ENCODE measurements at regions of chr6 and their contacts with region 1.

Region 1: DNA sequence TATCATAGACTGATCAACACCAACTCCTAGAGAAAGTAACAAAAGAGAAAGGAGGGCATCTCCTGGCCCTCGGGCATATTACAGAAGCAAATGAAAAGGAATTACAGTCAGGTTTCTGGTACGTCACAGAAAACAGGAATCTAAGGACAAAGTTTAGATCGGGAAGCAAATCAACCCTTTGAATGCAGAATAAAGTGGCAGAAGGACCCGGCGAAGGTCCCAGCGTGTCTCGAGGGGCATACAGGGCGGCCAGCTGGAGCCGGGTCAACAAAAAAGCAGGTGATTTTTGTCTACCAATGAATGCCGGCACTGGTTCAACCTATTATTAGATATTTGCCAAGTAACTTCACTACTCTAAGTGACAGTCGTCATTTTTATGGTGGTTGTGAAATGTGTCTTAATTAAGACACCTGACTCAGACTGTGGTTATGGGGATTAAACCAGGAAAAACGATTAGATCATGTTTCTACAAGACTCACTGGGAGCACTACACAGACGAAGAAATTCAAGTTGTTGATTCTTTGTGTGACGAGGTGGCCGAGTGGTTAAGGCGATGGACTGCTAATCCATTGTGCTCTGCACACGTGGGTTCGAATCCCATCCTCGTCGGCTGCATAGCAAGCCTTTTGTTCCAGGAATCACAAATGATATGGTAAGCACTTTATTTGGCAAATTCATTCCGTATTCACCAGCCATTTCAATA is 12.4 kb upstream of the ZSCAN9 start:
- DNase-seq: peak; percentile 92
- H3K4me3 ChIP-seq: peak overlapping the region; percentile 41
- H3K27ac ChIP-seq: no peak overlapping the region
- H3K4me1 ChIP-seq: peaks cover 3% of the 10 kb centered on the region
- H3K27me3 ChIP-seq: no peaks in the 10 kb centered on the region
- CTCF ChIP-seq: peak; percentile 36; the same call in 1 of the 2 replicates

Region 2: GRCh38 chr6:27902335-27903314 is 310.0 kb before region 1 on chr6:
- CTCF ChIA-PET with region 1: no interaction called
- POLR2A ChIA-PET with region 1: no interaction called
- intact Hi-C with region 1: loop called (anchors 5 kb)
- DNase-seq: peak; percentile 88
- H3K4me3 ChIP-seq: peak overlapping the region; percentile 82
- H3K27ac ChIP-seq: peak overlapping the region; percentile 87
- H3K4me1 ChIP-seq: no peaks in the 10 kb centered on the region
- H3K27me3 ChIP-seq: no peaks in the 10 kb centered on the region
- CTCF ChIP-seq: no peak

Region 3: GRCh38 chr6:28371706-28372451 is 159.2 kb after region 1 on chr6:
- CTCF ChIA-PET with region 1: no interaction called
- POLR2A ChIA-PET with region 1: no interaction called
- intact Hi-C with region 1: no loop called
- DNase-seq: no peak
- H3K4me3 ChIP-seq: no peak overlapping the region
- H3K27ac ChIP-seq: no peak overlapping the region
- H3K4me1 ChIP-seq: no peaks in the 10 kb centered on the region
- H3K27me3 ChIP-seq: no peaks in the 10 kb centered on the region
- CTCF ChIP-seq: no peak

Measured in A673 (cell line).